SK-N-SH (cell line): ENCODE measurements at regions of chr1 and their contacts with region 1.

Region 1: DNA sequence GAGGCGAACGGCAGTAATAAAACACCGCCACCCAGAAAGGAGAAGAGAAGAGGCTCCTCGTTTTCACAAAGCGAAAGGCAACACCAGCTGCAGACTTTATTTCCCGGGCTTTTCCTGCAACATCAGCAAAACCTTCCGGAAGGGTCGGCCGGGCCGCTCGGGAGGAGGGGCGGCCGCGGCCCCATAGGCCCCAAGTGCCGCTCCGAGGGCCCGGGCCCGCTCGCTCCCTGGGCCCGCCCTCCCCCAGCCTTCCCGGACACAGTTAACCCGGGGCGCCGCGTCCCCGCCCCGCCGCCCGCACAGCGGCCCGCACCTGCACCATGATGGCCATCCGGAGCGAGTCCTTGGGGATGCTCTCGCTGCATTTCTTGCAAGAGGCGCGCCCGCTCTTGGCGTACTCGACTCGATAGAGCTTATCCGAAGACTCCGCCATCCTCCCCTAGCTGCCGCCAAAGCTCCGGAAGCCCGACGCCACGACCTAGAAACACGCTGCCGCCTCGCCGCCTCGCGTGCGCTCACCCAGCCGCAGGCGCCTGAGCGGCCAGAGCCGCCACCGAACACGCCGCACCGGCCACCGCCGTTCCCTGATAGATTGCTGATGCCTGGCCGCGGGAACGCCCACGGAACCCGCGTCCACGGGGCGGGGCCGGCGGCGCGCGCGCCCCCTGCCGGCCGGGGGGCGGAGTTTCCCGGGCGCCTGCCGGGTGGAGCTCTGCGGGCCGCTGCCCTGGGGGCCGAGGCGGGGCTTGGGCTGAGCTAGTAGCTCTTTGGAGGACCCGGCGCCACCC is at the start of gene PARP1:
- DNase-seq: peak; percentile 99
- H3K4me3 ChIP-seq: peak within 1 kb of the TSS; percentile 58 to 79
- H3K27ac ChIP-seq: peak within 1 kb of the TSS; percentile 66 to 86
- H3K4me1 ChIP-seq: peaks cover 21 to 29% of the 10 kb centered on the region in 2 experiments; a peak in 3 of 4 replicates
- H3K27me3 ChIP-seq: no peaks in the 10 kb centered on the region
- CTCF ChIP-seq: peak; percentile 75
- EP300 ChIP-seq: 0 out of 4 replicates have a peak, but pooled peaks have one; percentile 8
- RAD21 ChIP-seq: no peak
- polyA plus RNA-seq, gene PARP1: 187 and 239 TPM in 2 replicates

Region 2: GRCh38 chr1:226370144-226370923 is 37.4 kb before region 1 on chr1:
- CTCF ChIA-PET with region 1: interaction called, 21 read pairs
- POLR2A ChIA-PET with region 1: no interaction called
- DNase-seq: no peak
- H3K4me3 ChIP-seq: no peak overlapping the region
- H3K27ac ChIP-seq: no peak overlapping the region
- H3K4me1 ChIP-seq: peaks cover 4 to 15% of the 10 kb centered on the region in 2 experiments; a peak in 3 of 4 replicates
- H3K27me3 ChIP-seq: no peaks in the 10 kb centered on the region
- CTCF ChIP-seq: no peak
- EP300 ChIP-seq: no peak
- RAD21 ChIP-seq: no peak

Region 3: DNA sequence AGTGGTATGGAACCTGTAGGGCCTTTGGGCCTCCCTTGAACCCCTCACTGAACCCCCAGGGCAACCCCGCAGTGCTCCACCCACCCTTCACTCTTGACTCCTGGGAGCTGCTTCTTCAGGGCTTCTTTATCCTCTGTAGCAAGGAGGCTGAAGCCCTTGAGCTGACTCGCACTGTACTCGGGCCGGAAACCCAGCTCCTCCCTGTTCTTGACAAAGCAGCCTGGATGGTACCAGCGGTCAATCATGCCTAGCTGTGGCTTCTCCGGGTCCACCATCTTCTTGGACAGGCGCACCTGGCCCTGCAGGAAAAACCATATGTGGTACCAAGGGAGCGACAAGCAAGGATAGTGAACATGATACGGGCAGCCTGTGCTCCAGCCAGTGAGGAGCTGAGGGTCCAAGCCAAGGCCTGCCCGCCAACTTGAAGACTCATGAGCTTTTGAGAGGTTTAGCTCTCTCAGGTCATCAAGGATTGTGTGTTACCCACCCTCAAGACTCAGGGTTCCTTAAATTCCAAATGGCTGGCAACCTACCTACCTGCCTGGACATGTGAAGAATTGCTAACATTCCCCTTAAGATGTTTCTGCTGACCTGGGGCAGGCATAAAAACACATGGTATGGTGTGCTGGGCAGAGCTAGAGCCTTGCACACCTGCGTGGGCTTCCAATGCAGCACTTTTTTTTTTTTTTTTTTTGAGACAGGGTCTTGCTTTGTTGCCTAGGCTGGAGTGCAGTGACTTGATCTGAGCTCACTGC is 17.2 kb before region 1 on chr1:
- CTCF ChIA-PET with region 1: interaction called, 13 read pairs
- POLR2A ChIA-PET with region 1: no interaction called
- DNase-seq: no peak
- H3K4me3 ChIP-seq: no peak overlapping the region
- H3K27ac ChIP-seq: no peak overlapping the region
- H3K4me1 ChIP-seq: no peaks in the 10 kb centered on the region
- H3K27me3 ChIP-seq: no peaks in the 10 kb centered on the region
- CTCF ChIP-seq: no peak
- EP300 ChIP-seq: no peak
- RAD21 ChIP-seq: no peak

Region 4: DNA sequence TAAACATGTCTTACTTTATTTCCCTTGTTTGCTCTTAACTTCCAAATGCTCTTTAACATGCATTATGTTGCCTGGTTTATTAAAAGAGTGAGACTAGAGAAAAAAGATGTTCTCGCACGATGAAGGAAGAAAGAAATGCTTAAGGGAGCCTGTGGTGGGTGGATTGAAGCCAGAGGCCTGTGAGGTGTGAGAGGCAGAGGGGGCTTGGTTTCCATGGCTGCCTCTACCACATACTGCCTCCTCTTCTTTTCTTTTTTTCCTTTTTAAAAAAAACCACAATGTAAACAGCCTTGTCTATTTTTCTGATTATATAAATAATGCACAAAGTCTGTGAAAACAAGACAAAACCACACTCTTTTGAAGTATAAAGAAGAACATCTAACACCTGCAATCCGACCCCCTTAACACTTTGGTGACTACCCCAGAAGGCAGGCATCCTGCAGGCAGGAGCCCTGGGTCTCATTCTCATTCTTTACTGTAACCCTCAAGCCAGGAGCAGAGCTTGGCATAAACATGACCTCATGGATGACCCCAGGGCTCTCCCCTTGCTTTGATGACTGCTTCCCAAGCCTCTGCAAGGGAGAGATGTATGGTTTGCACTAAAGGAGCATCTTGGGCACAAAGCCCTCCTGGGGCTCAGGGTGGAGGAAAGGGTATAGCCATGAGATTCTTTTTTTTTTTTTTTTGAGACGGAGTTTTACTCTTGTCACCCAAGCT is 10.3 kb after region 1 on chr1:
- CTCF ChIA-PET with region 1: interaction called, 82 read pairs
- POLR2A ChIA-PET with region 1: no interaction called
- DNase-seq: no peak
- H3K4me3 ChIP-seq: no peak overlapping the region
- H3K27ac ChIP-seq: no peak overlapping the region
- H3K4me1 ChIP-seq: no peaks in the 10 kb centered on the region
- H3K27me3 ChIP-seq: peaks cover 10% of the 10 kb centered on the region; the same call in 1 of the 2 replicates
- CTCF ChIP-seq: no peak
- EP300 ChIP-seq: no peak
- RAD21 ChIP-seq: no peak